IMR-90 (cell line): ENCODE measurements at regions of chr7 and their contacts with region 1.

Region 1: DNA sequence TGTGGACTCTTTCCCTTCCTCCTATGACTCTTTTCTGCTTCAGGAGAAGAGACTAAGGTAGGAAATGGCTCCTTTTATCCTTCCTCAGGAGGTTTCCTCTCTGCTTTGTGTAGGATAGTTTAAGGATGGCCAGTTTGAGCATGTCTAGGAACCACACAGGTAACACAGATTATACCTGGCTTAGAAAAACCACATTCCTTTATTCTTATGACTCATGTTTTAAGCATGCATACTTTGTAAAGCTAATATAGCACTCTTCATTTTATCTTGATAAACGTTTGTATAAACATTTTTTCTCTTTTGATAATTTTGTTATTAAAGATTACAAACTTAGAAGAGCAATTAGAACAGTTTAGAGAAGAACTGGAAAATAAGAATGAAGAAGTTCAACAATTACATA is 57.7 kb downstream of the CYP51A1 start:
- DNase-seq: no peak
- ATAC-seq: no peak
- H3K4me3 ChIP-seq: no peak overlapping the region
- H3K27ac ChIP-seq: no peak overlapping the region
- H3K4me1 ChIP-seq: no peaks in the 10 kb centered on the region
- H3K27me3 ChIP-seq: no peaks in the 10 kb centered on the region
- CTCF ChIP-seq: no peak
- POLR2A ChIP-seq: no peak
- RAD21 ChIP-seq: no peak

Region 2: DNA sequence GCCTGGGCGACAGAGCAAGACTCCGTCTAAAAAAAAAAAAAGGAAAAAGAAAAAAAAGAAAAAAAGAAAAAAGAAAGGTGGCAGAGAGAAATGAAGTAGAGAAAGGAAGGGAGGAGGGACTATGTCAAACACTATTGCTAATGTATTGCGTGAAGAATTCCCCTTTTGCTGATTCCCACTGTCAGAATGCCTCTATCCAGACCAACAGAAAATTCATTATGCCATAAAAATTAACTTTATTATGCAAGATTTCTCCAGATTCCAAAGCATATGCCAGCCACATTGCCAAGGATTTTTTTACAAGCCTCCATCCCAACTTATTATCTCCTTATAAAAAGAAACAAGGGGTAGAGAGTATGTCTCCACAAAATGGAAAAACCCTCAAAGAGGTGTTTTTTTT is 405.3 kb before region 1 on chr7:
- CTCF ChIA-PET with region 1: no interaction called
- POLR2A ChIA-PET with region 1: no interaction called
- dilution Hi-C with region 1: no loop called
- in situ Hi-C with region 1: no loop called
- intact Hi-C with region 1: no loop called
- DNase-seq: no peak
- ATAC-seq: no peak
- H3K4me3 ChIP-seq: no peak overlapping the region
- H3K27ac ChIP-seq: no peak overlapping the region
- H3K4me1 ChIP-seq: no peaks in the 10 kb centered on the region
- H3K27me3 ChIP-seq: no peaks in the 10 kb centered on the region
- CTCF ChIP-seq: no peak
- POLR2A ChIP-seq: no peak
- RAD21 ChIP-seq: no peak

Region 3: GRCh38 chr7:91894781-91895480 is 181.6 kb before region 1 on chr7:
- CTCF ChIA-PET with region 1: no interaction called
- POLR2A ChIA-PET with region 1: no interaction called
- dilution Hi-C with region 1: no loop called
- in situ Hi-C with region 1: no loop called
- intact Hi-C with region 1: loop called (anchors 1 kb)
- DNase-seq: peak; percentile 31
- ATAC-seq: peak; percentile 72
- H3K4me3 ChIP-seq: no peak overlapping the region
- H3K27ac ChIP-seq: no peak overlapping the region
- H3K4me1 ChIP-seq: no peaks in the 10 kb centered on the region; the same call in 1 of the 2 replicates
- H3K27me3 ChIP-seq: no peaks in the 10 kb centered on the region
- CTCF ChIP-seq: no peak
- POLR2A ChIP-seq: no peak
- RAD21 ChIP-seq: no peak

Region 4: DNA sequence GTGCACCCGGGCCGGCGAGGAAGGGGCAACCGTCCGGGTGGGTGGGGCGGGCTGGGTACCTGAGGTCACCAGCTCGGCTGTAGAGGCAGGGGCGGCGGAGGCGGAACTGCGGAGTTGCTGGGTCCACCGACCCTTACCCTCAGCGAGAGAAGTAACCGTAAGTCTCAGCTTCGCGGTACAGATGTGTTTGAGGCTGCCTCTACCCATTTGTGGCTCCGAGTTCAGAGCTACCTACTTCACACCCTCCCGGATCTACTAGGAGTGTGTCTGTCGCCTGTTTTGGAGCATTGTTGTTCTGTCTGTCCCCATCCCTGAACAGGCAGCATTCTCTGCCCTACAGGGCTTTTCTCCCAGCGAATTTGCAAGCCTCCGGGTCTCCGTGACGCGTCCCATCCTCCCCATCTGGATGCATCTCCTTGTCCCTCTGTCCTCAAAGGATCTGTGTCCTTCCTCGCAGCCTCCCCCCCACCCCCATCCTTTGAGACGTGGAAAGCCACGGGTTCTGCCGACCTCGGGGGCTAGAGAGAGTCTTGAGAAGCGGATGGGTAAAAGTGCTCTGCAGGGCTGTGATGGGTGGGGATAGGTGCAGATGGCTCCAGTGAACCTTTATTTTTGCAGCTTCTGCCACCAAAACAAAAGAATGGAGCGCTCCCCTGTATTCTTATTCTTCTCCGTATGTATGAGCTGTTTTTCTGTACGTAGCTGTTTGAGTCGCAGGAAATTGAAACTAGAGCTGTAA is 170.0 kb after region 1 on chr7:
- CTCF ChIA-PET with region 1: no interaction called
- POLR2A ChIA-PET with region 1: no interaction called
- dilution Hi-C with region 1: no loop called
- in situ Hi-C with region 1: no loop called
- intact Hi-C with region 1: no loop called
- DNase-seq: peak; percentile 18
- ATAC-seq: peak; percentile 41
- H3K4me3 ChIP-seq: peak overlapping the region; percentile 83
- H3K27ac ChIP-seq: peak overlapping the region; percentile 93
- H3K4me1 ChIP-seq: no peaks in the 10 kb centered on the region; the same call in 1 of the 2 replicates
- H3K27me3 ChIP-seq: no peaks in the 10 kb centered on the region
- CTCF ChIP-seq: no peak
- POLR2A ChIP-seq: no peak
- RAD21 ChIP-seq: no peak